ENCODE measurements at regions of chr14 and their contacts with region 1.

Region 1: GRCh38 chr14:88168498-88169165 is 154.4 kb downstream of the KCNK10 start:
- DNase-seq: peak; percentile 59
- H3K4me3 Mint-ChIP-seq: no peak overlapping the region
- H3K27ac Mint-ChIP-seq: no peak overlapping the region
- H3K4me1 Mint-ChIP-seq: peaks cover 22% of the 10 kb centered on the region
- H3K27me3 Mint-ChIP-seq: peaks cover 33% of the 10 kb centered on the region

Region 2: DNA sequence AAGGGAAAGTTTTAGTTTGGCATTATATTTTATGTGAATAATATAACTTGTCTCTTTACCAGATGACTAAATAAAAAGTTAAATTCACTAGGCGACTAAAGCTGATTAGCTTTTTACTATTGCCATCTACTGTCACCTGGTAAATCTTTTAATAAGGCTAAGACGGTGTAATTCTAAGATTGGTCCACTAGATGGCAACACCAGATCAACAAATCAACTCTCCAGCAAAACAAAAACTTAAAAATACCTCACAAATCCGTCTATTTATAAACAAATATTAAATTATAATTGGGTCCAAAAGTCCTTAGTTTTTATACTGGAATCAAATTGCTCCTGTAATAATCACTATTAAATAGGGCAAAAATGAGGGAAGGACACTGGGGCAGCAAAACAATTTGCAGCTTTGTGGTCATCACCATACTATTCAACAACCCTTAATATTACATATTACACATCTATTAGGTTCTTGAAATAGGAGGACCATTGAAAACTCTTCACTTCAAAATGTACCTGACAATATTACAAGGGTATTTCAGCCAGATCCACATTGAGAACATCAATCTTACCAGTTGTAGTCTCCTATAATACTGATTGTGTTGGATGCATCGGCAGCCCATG is 223.5 kb before region 1 on chr14:
- CTCF ChIA-PET with region 1: interaction called, 76 read pairs
- POLR2A ChIA-PET with region 1: interaction called, 3 read pairs
- DNase-seq: no peak
- H3K4me3 Mint-ChIP-seq: no peak overlapping the region
- H3K27ac Mint-ChIP-seq: no peak overlapping the region
- H3K4me1 Mint-ChIP-seq: peaks cover 5% of the 10 kb centered on the region
- H3K27me3 Mint-ChIP-seq: no peaks in the 10 kb centered on the region

Region 3: DNA sequence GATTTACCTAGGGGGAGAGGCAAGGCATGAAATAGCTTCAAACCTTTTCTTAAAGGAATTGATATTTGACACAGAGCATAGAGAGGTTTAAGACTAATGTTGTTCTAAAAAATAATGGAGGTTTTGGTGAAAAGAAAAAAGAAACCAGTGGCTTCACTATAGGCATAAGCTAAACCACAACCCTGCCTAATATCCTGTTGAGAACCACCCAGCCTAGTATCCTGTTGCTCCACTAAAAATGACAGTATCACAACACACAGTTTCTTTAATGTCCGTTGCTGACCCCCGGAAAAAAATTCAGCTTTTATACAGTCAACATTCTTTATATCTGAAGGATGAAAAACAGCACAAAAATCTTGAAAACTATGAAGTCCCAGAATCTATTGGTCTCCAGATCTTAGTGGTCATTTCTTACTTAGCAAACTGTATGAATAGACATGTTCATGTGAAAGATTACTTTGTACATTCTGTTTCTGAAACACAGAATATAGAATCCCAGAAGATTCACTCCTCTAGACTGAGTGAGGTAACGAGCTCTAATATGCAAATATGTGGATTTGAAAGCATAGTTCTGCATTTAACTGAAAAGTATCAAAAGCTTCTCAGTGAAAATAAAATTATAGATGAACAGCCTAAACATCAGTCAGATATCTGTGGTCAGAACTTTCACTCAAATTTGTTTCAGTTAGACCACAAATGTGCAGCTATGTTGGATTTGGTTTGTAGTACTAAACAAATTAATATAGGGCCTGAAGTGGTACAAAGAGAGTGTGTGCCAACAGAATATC is 216.1 kb before region 1 on chr14:
- CTCF ChIA-PET with region 1: interaction called, 76 read pairs
- POLR2A ChIA-PET with region 1: no interaction called
- DNase-seq: no peak
- H3K4me3 Mint-ChIP-seq: peak overlapping the region; percentile 65
- H3K27ac Mint-ChIP-seq: peak overlapping the region; percentile 88
- H3K4me1 Mint-ChIP-seq: peaks cover 32% of the 10 kb centered on the region
- H3K27me3 Mint-ChIP-seq: no peaks in the 10 kb centered on the region

Region 4: DNA sequence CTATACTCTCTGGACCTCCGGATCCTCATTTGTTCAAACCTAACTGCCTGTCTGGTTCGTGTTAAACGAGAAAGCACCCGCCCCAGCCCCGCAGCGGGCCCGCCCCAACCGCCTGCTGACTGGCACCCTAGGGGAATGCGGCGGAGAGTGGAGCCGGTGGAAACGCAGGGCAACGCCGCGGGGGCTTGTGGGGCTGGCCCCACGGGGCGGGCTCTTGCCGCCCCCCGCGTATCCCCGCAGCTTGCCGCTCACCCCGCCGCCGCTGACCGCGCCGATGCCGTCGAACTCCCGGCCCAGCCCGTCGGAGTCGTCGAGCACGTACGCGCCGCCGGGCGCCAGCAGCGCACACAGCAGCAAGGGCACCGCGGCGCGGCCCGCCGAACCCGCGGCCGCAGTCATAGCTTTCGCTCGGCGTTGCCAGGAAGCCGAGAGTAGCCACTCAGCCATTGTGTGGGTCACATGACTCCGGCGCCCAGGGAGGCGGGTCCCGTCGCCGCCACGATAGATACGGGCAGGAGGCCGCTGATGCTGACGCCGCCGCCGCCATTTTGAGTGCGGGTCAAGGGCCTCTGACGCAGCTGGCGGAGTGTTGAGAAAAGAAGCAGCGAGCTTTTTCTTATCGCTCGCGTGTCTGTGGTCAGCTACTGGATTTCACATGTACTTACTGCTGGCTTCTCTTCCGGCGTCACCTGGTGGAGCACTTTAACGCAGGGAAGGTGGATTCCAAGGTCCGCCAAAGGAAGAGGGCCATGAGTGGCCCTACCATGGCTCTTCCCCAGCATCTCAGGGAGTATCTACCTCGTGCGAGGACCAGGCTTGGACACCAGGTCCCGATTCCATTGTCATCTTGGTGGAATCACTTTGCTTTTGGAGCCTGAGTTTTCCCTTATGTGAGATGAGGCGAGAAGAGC is 175.7 kb before region 1 on chr14 and contains the start of gene GALC:
- CTCF ChIA-PET with region 1: interaction called, 14 read pairs
- POLR2A ChIA-PET with region 1: interaction called, 4 read pairs
- DNase-seq: peak; percentile 97
- H3K4me3 Mint-ChIP-seq: peak within 1 kb of the TSS; percentile 80
- H3K27ac Mint-ChIP-seq: peak within 1 kb of the TSS; percentile 91
- H3K4me1 Mint-ChIP-seq: peaks cover 56% of the 10 kb centered on the region
- H3K27me3 Mint-ChIP-seq: no peaks in the 10 kb centered on the region
- total RNA-seq, gene GALC: 24.3 to 27.6 TPM

Region 5: DNA sequence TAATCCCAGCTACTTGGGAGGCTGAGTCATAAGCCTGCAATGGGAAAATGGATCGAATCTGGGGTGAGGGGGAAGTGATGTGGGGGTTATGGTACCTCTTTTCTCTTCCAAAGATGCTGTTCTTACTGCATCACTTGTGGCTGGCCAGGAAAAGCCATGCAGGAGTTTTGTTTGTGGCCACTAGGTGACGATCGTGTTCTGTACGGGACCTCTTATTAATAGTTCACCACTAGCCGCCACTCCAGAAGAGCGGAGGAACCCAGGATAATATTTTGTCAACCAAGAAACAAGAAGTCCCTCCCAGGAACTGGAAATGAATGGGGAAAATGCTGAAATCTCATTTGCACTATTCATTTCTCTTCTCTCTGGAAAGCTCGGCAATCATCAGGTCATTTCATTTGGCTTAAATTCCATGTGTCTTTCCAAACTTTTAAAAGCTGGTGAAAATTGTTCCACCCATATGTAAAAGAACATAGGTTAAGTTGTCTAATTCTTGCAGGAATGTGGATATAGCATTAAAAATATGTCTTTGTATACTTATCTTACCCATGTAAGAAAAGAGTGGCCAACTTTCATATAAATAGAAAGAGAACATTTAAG is 154.8 kb before region 1 on chr14:
- CTCF ChIA-PET with region 1: interaction called, 14 read pairs
- POLR2A ChIA-PET with region 1: no interaction called
- DNase-seq: peak; percentile 30
- H3K4me3 Mint-ChIP-seq: no peak overlapping the region
- H3K27ac Mint-ChIP-seq: no peak overlapping the region
- H3K4me1 Mint-ChIP-seq: peaks cover 45% of the 10 kb centered on the region
- H3K27me3 Mint-ChIP-seq: no peaks in the 10 kb centered on the region

Region 6: GRCh38 chr14:88181072-88181471 is 12.4 kb after region 1 on chr14:
- CTCF ChIA-PET with region 1: interaction called, 10 read pairs
- POLR2A ChIA-PET with region 1: no interaction called
- DNase-seq: peak; percentile 19
- H3K4me3 Mint-ChIP-seq: no peak overlapping the region
- H3K27ac Mint-ChIP-seq: no peak overlapping the region
- H3K4me1 Mint-ChIP-seq: peaks cover 13% of the 10 kb centered on the region
- H3K27me3 Mint-ChIP-seq: no peaks in the 10 kb centered on the region

Region 7: GRCh38 chr14:88189417-88190191 is 21.0 kb after region 1 on chr14:
- CTCF ChIA-PET with region 1: interaction called, 19 read pairs
- POLR2A ChIA-PET with region 1: no interaction called
- DNase-seq: peak; percentile 62
- H3K4me3 Mint-ChIP-seq: no peak overlapping the region
- H3K27ac Mint-ChIP-seq: no peak overlapping the region
- H3K4me1 Mint-ChIP-seq: peaks cover 2% of the 10 kb centered on the region
- H3K27me3 Mint-ChIP-seq: peaks cover 12% of the 10 kb centered on the region

Region 8: GRCh38 chr14:88204214-88204613 is 35.6 kb after region 1 on chr14:
- CTCF ChIA-PET with region 1: no interaction called
- POLR2A ChIA-PET with region 1: no interaction called
- DNase-seq: no peak
- H3K4me3 Mint-ChIP-seq: no peak overlapping the region
- H3K27ac Mint-ChIP-seq: no peak overlapping the region
- H3K4me1 Mint-ChIP-seq: no peaks in the 10 kb centered on the region
- H3K27me3 Mint-ChIP-seq: peaks cover 7% of the 10 kb centered on the region